Natural killer cell (primary cell): ENCODE measurements at regions of chr3 and their contacts with region 1.

Region 1: DNA sequence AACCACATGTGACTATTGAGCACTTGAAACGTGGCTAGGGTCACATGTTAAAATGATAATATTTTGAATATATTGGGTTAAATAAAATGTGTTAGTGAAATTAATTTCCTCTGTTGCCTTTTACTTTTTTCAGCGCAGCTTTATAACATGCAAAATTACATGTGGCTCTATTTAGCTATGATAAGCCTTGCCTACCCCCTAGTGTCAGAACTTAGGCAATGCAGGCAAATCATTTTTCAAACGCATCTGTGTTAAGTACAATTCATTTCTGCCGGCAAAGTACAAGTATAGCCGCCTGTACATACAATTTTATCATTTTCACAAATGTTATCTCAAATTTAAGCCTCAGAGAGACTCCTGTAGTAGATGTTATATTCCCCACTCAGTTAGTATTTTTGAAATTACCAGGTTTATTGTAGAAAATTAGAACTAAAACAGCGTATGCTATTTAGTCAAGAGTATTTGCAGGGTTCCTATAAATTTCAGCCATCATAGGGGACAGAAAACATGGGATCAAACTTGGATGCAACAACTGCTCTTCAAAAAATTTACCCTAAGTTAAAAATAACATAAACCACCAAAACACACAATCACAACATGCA is 56.1 kb downstream of the TAFA4 start:
- DNase-seq: peak in 1 of 2 donors; percentile 74
- ATAC-seq: peak in 2 of 3 donors; percentile 55 to 74
- H3K4me3 ChIP-seq: no peak overlapping the region
- H3K4me3 Mint-ChIP-seq: no peak overlapping the region
- H3K27ac ChIP-seq: no peak overlapping the region
- H3K27ac Mint-ChIP-seq: no peak overlapping the region
- H3K4me1 ChIP-seq: no peaks in the 10 kb centered on the region
- H3K4me1 Mint-ChIP-seq: no peaks in the 10 kb centered on the region
- H3K27me3 ChIP-seq: peaks cover 2% of the 10 kb centered on the region
- H3K27me3 Mint-ChIP-seq: peaks cover 8 to 40% of the 10 kb centered on the region in 2 donors
- CTCF ChIP-seq: peak; percentile 85

Region 2: GRCh38 chr3:66971891-66972551 is 1904.2 kb before region 1 on chr3:
- intact Hi-C with region 1: loop called (anchors 1 kb)
- DNase-seq: peak; percentile 38 to 79
- ATAC-seq: peak; percentile 87 to 94 (median 91)
- H3K4me3 ChIP-seq: peak overlapping the region; percentile 31
- H3K4me3 Mint-ChIP-seq: peak overlapping the region; percentile 83
- H3K27ac ChIP-seq: peak overlapping the region; percentile 47
- H3K27ac Mint-ChIP-seq: peak overlapping the region in 1 of 2 donors; percentile 81
- H3K4me1 ChIP-seq: peaks cover 9% of the 10 kb centered on the region
- H3K4me1 Mint-ChIP-seq: peaks cover 12 to 13% of the 10 kb centered on the region in 2 donors
- H3K27me3 ChIP-seq: peaks cover 3% of the 10 kb centered on the region
- H3K27me3 Mint-ChIP-seq: peaks cover 6 to 20% of the 10 kb centered on the region in 2 donors
- CTCF ChIP-seq: peak; percentile 88

Region 3: DNA sequence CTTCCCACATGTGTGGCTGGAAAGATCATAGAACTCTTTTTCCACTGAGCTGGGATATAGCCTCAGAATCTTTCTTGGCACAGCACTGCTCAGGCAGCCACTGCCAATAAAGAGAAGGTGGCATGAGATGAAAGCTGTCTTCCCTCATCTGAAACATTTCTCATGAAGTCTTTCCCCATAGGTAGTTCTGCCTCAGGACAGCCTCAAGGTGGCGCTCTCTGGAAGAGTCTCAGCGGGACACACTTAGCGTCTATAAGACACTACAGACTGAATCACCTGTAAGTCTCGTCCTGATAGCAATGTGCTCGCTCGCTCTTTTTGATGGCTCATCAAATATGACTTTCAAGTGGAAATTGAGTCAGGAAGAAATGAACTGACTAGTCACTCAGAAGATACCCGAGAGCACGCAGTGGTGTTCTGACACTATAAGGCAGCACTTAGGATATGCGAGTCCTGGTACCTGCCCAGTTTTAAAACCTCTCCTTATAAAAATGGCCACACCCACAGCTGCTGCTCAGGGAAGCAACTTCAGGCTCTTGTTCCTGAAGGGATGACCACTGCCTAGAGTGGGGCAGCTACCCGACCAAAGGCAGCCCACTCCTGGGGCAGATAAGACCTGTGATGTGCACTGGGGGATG is 1491.3 kb before region 1 on chr3:
- intact Hi-C with region 1: loop called (anchors 5 kb)
- DNase-seq: peak in 1 of 2 donors; percentile 60
- ATAC-seq: peak in 2 of 3 donors; percentile 38 to 50
- H3K4me3 ChIP-seq: no peak overlapping the region
- H3K4me3 Mint-ChIP-seq: no peak overlapping the region
- H3K27ac ChIP-seq: no peak overlapping the region
- H3K27ac Mint-ChIP-seq: no peak overlapping the region
- H3K4me1 ChIP-seq: no peaks in the 10 kb centered on the region
- H3K4me1 Mint-ChIP-seq: peaks cover 14 to 15% of the 10 kb centered on the region in 2 donors
- H3K27me3 ChIP-seq: no peaks in the 10 kb centered on the region
- H3K27me3 Mint-ChIP-seq: no peaks in the 10 kb centered on the region
- CTCF ChIP-seq: peak; percentile 39

Region 4: DNA sequence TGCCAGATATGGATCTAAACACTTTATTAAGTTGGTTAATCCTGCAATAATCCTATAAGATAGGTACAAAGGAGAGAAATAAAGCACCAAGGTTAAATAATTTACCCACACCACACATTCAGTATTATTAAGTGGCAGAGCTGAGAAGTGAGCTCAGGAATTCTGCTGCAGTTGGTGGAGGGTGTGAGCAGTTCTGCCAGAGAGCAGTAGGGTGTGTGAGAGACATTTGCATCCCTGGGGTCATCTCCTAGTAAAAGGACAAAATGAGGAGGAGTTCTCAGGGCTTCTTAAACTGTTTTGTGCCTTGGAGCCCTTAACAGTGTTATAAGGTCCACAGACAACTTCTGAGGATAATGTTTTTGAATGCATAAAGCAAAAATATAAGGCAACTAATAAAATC is 428.3 kb before region 1 on chr3:
- intact Hi-C with region 1: no loop called
- DNase-seq: no peak
- ATAC-seq: no peak
- H3K4me3 ChIP-seq: no peak overlapping the region
- H3K4me3 Mint-ChIP-seq: no peak overlapping the region
- H3K27ac ChIP-seq: no peak overlapping the region
- H3K27ac Mint-ChIP-seq: no peak overlapping the region
- H3K4me1 ChIP-seq: no peaks in the 10 kb centered on the region
- H3K4me1 Mint-ChIP-seq: no peaks in the 10 kb centered on the region
- H3K27me3 ChIP-seq: no peaks in the 10 kb centered on the region
- H3K27me3 Mint-ChIP-seq: no peaks in the 10 kb centered on the region
- CTCF ChIP-seq: no peak

Region 5: GRCh38 chr3:68943753-68944500 is 67.7 kb after region 1 on chr3:
- intact Hi-C with region 1: no loop called
- DNase-seq: no peak
- ATAC-seq: no peak
- H3K4me3 ChIP-seq: no peak overlapping the region
- H3K4me3 Mint-ChIP-seq: no peak overlapping the region
- H3K27ac ChIP-seq: no peak overlapping the region
- H3K27ac Mint-ChIP-seq: no peak overlapping the region
- H3K4me1 ChIP-seq: no peaks in the 10 kb centered on the region
- H3K4me1 Mint-ChIP-seq: no peaks in the 10 kb centered on the region
- H3K27me3 ChIP-seq: peaks cover 3% of the 10 kb centered on the region
- H3K27me3 Mint-ChIP-seq: peaks cover 10 to 58% of the 10 kb centered on the region in 2 donors
- CTCF ChIP-seq: no peak